GM12878 (cell line): ENCODE measurements at regions of chr9 and their contacts with region 1.

Region 1: GRCh38 chr9:4366591-4367330 is 66.9 kb upstream of the GLIS3 start:
- DNase-seq: no peak
- ATAC-seq: peak; percentile 64
- H3K4me3 ChIP-seq: no peak overlapping the region
- H3K27ac ChIP-seq: no peak overlapping the region
- H3K4me1 ChIP-seq: no peaks in the 10 kb centered on the region
- H3K27me3 ChIP-seq: no peaks in the 10 kb centered on the region
- CTCF ChIP-seq: peak; percentile 73 to 74 (median 73)
- EP300 ChIP-seq: no peak
- POLR2A ChIP-seq: no peak
- RAD21 ChIP-seq: peak; percentile 71

Region 2: GRCh38 chr9:3732077-3733038 is 634.4 kb before region 1 on chr9:
- CTCF ChIA-PET with region 1: interaction called, 9 read pairs
- POLR2A ChIA-PET with region 1: interaction called, 4 read pairs
- RAD21 ChIA-PET with region 1: interaction called, 3 read pairs
- SMC1A ChIA-PET with region 1: no interaction called
- in situ Hi-C with region 1: no loop called
- intact Hi-C with region 1: loop called (anchors 1 kb)
- DNase-seq: peak; percentile 64
- ATAC-seq: peak; percentile 88
- H3K4me3 ChIP-seq: no peak overlapping the region
- H3K27ac ChIP-seq: no peak overlapping the region
- H3K4me1 ChIP-seq: peaks cover 22% of the 10 kb centered on the region
- H3K27me3 ChIP-seq: no peaks in the 10 kb centered on the region
- CTCF ChIP-seq: peak; percentile 60 to 83 (median 65)
- EP300 ChIP-seq: no peak
- POLR2A ChIP-seq: no peak
- RAD21 ChIP-seq: peak; percentile 83

Region 3: GRCh38 chr9:4225291-4226028 is 141.3 kb before region 1 on chr9:
- CTCF ChIA-PET with region 1: no interaction called
- POLR2A ChIA-PET with region 1: no interaction called
- RAD21 ChIA-PET with region 1: no interaction called
- SMC1A ChIA-PET with region 1: no interaction called
- in situ Hi-C with region 1: no loop called
- intact Hi-C with region 1: no loop called
- DNase-seq: no peak
- ATAC-seq: peak; percentile 47; the same call in 2 of the 3 replicates
- H3K4me3 ChIP-seq: no peak overlapping the region
- H3K27ac ChIP-seq: no peak overlapping the region
- H3K4me1 ChIP-seq: no peaks in the 10 kb centered on the region
- H3K27me3 ChIP-seq: peaks cover 0 to 2% of the 10 kb centered on the region in 2 experiments; a peak in 1 of 4 replicates
- CTCF ChIP-seq: peak in 2 of 3 experiments; percentile 17 to 38; a peak in 2 of 6 replicates
- EP300 ChIP-seq: no peak
- POLR2A ChIP-seq: no peak
- RAD21 ChIP-seq: peak; percentile 36

Region 4: DNA sequence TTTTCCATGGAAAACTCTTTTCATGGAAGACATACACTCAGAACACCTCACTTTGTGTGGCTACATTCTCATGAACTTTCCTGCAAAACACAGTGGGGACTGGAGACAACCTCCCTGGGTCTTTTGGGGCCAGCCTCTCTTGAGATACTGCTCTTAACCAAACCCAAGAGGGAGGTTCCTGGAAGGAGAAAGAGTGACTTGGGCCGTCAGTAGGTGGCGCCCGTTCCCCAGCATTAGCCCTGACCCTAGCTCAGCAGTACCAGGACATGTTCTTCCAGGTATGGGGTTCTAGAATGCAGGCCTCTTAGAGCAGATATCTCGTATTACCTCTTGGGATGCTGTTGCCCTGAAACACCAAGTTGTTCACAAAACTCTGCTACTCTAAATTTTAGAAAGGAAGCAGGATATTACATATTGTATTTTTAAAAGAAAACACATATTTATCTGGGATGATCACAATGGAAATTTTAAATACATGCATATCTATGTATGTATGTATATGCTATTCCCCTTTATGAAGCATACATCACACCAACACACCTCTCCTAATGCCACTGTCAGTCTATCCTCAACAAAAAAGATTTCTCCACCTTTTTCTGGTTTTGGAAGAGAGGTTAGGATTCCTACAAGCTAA is 51.1 kb before region 1 on chr9:
- CTCF ChIA-PET with region 1: interaction called, 93 read pairs
- POLR2A ChIA-PET with region 1: no interaction called
- RAD21 ChIA-PET with region 1: interaction called, 23 read pairs
- SMC1A ChIA-PET with region 1: interaction called, 50 read pairs
- in situ Hi-C with region 1: no loop called
- intact Hi-C with region 1: loop called (anchors 2 kb)
- DNase-seq: peak; percentile 32
- ATAC-seq: peak; percentile 100
- H3K4me3 ChIP-seq: no peak overlapping the region
- H3K27ac ChIP-seq: no peak overlapping the region
- H3K4me1 ChIP-seq: no peaks in the 10 kb centered on the region
- H3K27me3 ChIP-seq: no peaks in the 10 kb centered on the region; a peak in 1 of 4 replicates
- CTCF ChIP-seq: peak; percentile 81 to 92 (median 91)
- EP300 ChIP-seq: no peak
- POLR2A ChIP-seq: no peak
- RAD21 ChIP-seq: peak; percentile 91

Region 5: GRCh38 chr9:4353236-4353635 is 13.5 kb before region 1 on chr9:
- CTCF ChIA-PET with region 1: interaction called, 15 read pairs
- POLR2A ChIA-PET with region 1: no interaction called
- RAD21 ChIA-PET with region 1: no interaction called
- SMC1A ChIA-PET with region 1: interaction called, 4 read pairs
- in situ Hi-C with region 1: no loop called
- intact Hi-C with region 1: no loop called
- DNase-seq: no peak
- ATAC-seq: no peak
- H3K4me3 ChIP-seq: no peak overlapping the region
- H3K27ac ChIP-seq: no peak overlapping the region
- H3K4me1 ChIP-seq: no peaks in the 10 kb centered on the region
- H3K27me3 ChIP-seq: 0 out of 4 replicates have a peak, but pooled peaks cover 0 to 1% of the 10 kb centered on the region in 2 experiments
- CTCF ChIP-seq: no peak
- EP300 ChIP-seq: no peak
- POLR2A ChIP-seq: no peak
- RAD21 ChIP-seq: no peak

Region 6: GRCh38 chr9:4393806-4394523 is 27.2 kb after region 1 on chr9:
- CTCF ChIA-PET with region 1: interaction called, 11 read pairs
- POLR2A ChIA-PET with region 1: no interaction called
- RAD21 ChIA-PET with region 1: no interaction called
- SMC1A ChIA-PET with region 1: interaction called, 6 read pairs
- in situ Hi-C with region 1: no loop called
- intact Hi-C with region 1: no loop called
- DNase-seq: no peak
- ATAC-seq: no peak
- H3K4me3 ChIP-seq: no peak overlapping the region
- H3K27ac ChIP-seq: no peak overlapping the region
- H3K4me1 ChIP-seq: no peaks in the 10 kb centered on the region
- H3K27me3 ChIP-seq: no peaks in the 10 kb centered on the region
- CTCF ChIP-seq: no peak
- EP300 ChIP-seq: no peak
- POLR2A ChIP-seq: no peak
- RAD21 ChIP-seq: 0 out of 2 replicates have a peak, but pooled peaks have one; percentile 15